ENCODE measurements at regions of chr6 and their contacts with region 1.

Region 1: DNA sequence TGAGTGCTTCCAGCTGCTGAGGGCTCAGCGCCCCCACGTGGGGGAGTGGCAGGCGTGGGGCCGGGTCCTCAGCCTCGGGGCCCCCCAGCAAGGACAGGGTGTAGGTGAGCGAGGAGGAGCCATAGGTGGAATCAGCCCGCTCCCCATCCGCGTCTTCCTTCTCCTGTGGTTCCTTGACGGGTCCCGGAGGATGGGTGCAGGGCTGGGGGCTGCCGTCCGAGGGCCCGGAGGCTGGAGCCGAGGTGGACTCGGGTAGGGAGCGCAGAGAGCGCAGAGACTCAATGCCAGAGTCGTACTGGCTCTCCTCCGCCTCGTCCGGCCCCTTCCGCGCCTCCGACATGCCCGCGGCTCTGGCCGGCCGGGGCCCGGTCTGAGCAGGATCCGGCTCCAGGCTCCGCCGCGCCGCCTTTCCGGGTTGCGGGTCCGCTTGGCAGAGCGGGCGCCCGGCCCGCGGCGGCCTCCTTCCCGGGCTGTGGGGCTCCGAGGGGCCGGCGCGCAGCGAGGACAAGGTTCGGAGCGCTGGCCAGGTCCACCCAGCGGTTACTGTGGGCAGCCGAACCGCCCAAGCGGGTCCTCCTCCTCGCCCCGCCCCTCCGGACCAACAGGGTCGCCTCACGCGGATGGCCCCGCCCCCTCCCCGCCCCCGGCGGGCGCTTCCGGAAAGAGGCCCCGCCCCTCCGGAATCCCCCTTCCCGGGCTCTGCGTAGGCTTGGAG is at the start of gene NFKBIE:
- DNase-seq: peak; percentile 91
- H3K4me3 ChIP-seq: peak within 1 kb of the TSS; percentile 94
- H3K27ac ChIP-seq: peak within 1 kb of the TSS; percentile 79
- H3K4me1 ChIP-seq: peaks cover 25% of the 10 kb centered on the region
- H3K27me3 ChIP-seq: no peaks in the 10 kb centered on the region
- CTCF ChIP-seq: peak; percentile 59
- total RNA-seq, gene NFKBIE: 5.2 and 10.5 TPM in 2 replicates

Region 2: DNA sequence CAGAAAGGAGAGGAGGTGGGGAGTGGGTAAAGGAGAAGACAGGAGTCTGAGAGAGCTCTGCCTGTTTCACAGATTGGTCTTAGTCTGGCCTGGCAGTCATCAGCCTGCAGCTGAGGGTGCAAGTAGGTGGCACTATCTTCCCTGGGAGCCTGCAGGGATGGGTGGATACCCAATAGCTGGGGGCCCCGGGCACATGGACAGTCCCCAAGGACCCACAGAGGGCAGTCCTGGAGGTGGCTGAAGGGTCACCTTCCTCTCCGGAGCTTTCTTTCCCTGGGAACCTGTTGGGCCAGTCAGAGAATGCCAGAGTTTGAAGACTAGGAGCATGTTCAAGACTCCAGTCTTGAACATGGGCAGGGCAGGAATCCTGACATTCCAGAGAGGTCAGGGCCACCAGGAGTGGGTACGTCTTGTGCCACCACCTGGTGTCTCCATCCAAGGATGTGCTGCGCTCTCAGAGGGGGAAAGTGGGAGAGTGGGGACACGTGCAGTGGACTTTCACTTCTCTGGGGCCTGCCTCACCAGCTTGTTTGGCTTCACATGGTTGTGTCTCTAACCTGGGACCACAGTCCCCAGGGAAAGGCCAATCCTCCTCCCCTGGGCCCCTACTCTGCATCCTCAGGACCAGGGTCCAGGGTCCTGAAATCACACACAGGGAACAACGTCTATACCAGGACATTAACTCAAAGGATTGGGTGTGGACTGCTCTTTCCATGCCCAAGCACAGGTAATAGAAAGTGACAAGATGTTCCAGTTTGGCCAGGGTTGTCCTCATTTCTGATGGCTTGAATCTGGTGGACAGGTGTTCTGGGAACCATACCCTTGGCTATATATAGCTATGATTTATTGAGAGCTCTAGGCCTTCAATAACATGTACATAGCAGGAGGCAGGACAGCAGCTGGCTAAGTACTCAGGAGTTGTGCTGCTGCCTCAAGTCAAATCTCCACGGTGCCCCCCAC is 29.9 kb after region 1 on chr6:
- CTCF ChIA-PET with region 1: interaction called, 11 read pairs
- POLR2A ChIA-PET with region 1: no interaction called
- intact Hi-C with region 1: no loop called
- DNase-seq: no peak
- H3K4me3 ChIP-seq: no peak overlapping the region
- H3K27ac ChIP-seq: no peak overlapping the region
- H3K4me1 ChIP-seq: no peaks in the 10 kb centered on the region
- H3K27me3 ChIP-seq: peaks cover 45% of the 10 kb centered on the region
- CTCF ChIP-seq: no peak

Region 3: GRCh38 chr6:44304282-44305199 is 39.4 kb after region 1 on chr6:
- CTCF ChIA-PET with region 1: interaction called, 18 read pairs
- POLR2A ChIA-PET with region 1: no interaction called
- intact Hi-C with region 1: loop called (anchors 2 kb)
- DNase-seq: peak; percentile 51
- H3K4me3 ChIP-seq: no peak overlapping the region
- H3K27ac ChIP-seq: peak overlapping the region; percentile 47
- H3K4me1 ChIP-seq: no peaks in the 10 kb centered on the region
- H3K27me3 ChIP-seq: no peaks in the 10 kb centered on the region
- CTCF ChIP-seq: peak; percentile 86

Region 4: DNA sequence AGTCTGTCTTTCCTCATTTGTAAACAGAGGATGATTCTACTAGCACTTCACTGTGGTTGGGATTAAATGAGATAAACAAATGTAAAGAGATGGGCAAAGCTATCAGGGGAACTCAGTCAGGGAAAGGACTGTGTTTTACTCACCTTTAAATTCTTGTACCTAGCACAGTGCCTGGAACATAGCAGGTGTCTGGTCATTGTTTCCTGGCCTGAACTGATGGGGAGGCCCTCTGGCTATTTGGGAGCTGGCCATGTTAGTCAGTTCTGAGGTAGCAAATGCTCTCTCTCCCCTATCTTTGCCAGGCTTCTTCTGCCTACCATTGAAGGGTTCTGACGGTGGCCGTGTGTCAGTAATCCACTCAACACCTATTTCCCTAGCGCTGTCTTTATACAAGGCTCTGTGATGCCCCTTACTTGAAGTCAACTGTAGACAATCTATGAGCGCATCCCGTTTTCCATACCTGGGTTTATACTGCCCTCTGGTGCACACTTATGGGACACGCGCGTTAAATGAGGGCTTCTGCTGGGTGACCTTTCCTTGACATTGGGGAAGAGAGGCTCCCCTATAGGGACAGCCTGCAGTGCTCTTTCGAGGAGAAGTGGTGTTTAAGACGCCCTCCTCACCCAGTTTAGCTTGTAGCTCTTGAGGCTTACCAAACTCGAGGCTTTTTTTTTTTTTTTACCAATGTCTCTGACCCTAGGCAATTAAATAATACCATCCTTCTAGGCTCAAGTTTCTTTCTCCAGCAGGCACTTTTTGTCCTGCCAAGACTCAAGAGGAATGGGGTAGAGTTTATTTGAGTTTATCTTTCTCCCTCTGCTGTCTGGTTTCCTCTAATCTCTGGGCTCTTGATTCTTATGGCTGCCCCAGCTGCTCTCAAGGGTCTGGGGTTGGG is 73.3 kb after region 1 on chr6:
- CTCF ChIA-PET with region 1: interaction called, 10 read pairs
- POLR2A ChIA-PET with region 1: no interaction called
- intact Hi-C with region 1: loop called (anchors 1 kb)
- DNase-seq: peak; percentile 82
- H3K4me3 ChIP-seq: no peak overlapping the region
- H3K27ac ChIP-seq: no peak overlapping the region
- H3K4me1 ChIP-seq: no peaks in the 10 kb centered on the region
- H3K27me3 ChIP-seq: peaks cover 22% of the 10 kb centered on the region
- CTCF ChIP-seq: peak; percentile 81

Region 5: GRCh38 chr6:44456070-44456965 is 191.2 kb after region 1 on chr6:
- CTCF ChIA-PET with region 1: no interaction called
- POLR2A ChIA-PET with region 1: no interaction called
- intact Hi-C with region 1: loop called (anchors 5 kb)
- DNase-seq: peak; percentile 77
- H3K4me3 ChIP-seq: no peak overlapping the region
- H3K27ac ChIP-seq: no peak overlapping the region
- H3K4me1 ChIP-seq: no peaks in the 10 kb centered on the region
- H3K27me3 ChIP-seq: no peaks in the 10 kb centered on the region
- CTCF ChIP-seq: peak; percentile 88

Measured in A673 (cell line).